ENCODE measurements at regions of chr17 and their contacts with region 1.

Region 1: GRCh38 chr17:19766422-19767270 is 18.5 kb upstream of the ALDH3A1 start:
- DNase-seq: peak; percentile 75 to 85
- H3K4me3 ChIP-seq: no peak overlapping the region
- H3K27ac ChIP-seq: no peak overlapping the region
- H3K4me1 ChIP-seq: peaks cover 0 to 19% (median 12%) of the 10 kb centered on the region in 4 donors
- H3K27me3 ChIP-seq: no peaks in the 10 kb centered on the region
- CTCF ChIP-seq: peak; percentile 92 to 98

Region 2: GRCh38 chr17:19513897-19514488 is 252.7 kb before region 1 on chr17:
- intact Hi-C with region 1: loop called (anchors 5 kb)
- DNase-seq: peak; percentile 62 to 81
- H3K4me3 ChIP-seq: peak overlapping the region in 1 of 2 donors; percentile 30
- H3K27ac ChIP-seq: peak overlapping the region; percentile 69 to 77
- H3K4me1 ChIP-seq: peaks cover 0 to 17% (median 9%) of the 10 kb centered on the region in 4 donors
- H3K27me3 ChIP-seq: no peaks in the 10 kb centered on the region
- CTCF ChIP-seq: peak; percentile 93 to 95

Region 3: DNA sequence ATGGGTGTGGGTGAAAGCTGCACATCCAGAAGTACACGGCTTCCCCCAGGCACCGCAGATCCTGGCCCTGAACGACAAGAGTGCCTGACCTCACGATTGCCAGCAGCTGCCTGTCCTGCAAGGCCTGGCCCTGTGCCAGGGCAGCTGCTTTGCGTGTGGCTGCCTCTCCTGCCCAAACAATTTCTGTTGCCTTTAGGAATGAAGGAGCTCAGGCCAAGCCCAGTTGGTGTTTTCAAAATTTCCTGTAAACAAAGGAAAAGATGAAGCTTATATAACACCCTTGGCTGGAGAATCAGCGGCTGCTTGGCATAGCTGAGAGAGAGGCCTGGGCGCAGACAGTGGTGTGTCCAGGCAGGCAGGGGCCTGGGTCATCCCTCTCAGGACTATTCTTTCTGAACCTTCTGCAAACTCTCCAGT is 38.6 kb before region 1 on chr17:
- intact Hi-C with region 1: no loop called
- DNase-seq: peak; percentile 90 to 94
- H3K4me3 ChIP-seq: no peak overlapping the region
- H3K27ac ChIP-seq: peak overlapping the region; percentile 78 to 79
- H3K4me1 ChIP-seq: peaks cover 0 to 45% (median 29%) of the 10 kb centered on the region in 4 donors
- H3K27me3 ChIP-seq: no peaks in the 10 kb centered on the region
- CTCF ChIP-seq: no peak

Measured in tibial artery (tissue), 4 donors.